H1 (cell line): ENCODE measurements at regions of chr11 and their contacts with region 1.

Region 1: GRCh38 chr11:119474682-119475596 is 52.0 kb upstream of the THY1 start:
- DNase-seq: peak in 1 of 2 experiments; percentile 91
- H3K4me3 ChIP-seq: no peak overlapping the region
- H3K27ac ChIP-seq: no peak overlapping the region
- H3K4me1 ChIP-seq: peaks cover 0 to 13% (median under 1%) of the 10 kb centered on the region in 4 experiments; a peak in 5 of 7 replicates
- H3K27me3 ChIP-seq: no peaks in the 10 kb centered on the region; a peak in 2 of 7 replicates
- CTCF ChIP-seq: peak; percentile 83 to 95 (median 95)
- EP300 ChIP-seq: no peak
- POLR2A ChIP-seq: no peak
- RAD21 ChIP-seq: peak; percentile 98 to 99

Region 2: DNA sequence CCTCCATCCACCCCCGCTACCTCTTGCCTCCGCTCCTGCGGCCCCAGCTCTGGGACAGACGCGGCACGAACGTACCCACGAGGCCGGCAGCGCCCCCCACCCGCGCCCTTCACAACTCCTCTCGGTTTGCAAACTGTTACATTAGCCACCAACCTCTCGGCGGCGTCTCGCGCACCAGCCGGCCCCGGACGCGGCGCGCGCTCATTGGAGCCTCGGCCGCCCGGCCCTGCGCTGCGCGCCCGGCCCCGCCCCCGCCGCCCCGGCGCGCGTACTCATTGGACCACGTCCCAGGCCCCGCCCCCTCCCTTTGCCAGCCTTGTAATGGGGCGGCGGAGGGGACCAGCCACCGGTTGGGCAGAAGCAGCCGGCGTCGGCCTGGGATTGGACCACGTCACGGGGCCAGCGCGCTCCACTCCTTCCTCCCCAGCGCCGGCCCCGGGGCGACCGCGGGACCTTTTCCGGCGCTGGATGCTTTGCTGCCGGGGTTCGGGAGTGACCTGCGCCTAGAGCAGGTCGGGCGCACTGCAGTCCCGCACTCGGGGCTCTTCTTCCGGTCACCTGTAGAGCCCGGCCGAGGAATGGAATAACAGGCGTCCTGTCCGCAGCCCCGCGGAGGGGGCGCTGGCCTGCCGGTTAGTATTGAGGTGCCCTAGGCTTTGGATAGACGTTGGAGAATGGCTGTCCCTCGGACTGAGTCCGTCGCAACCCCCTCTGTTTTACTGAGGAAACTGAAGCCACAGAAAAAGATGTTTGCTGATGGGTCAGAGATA is 417.8 kb before region 1 on chr11 and contains the start of gene HYOU1:
- CTCF ChIA-PET with region 1: no interaction called
- POLR2A ChIA-PET with region 1: no interaction called
- DNase-seq: peak; percentile 87 to 97
- H3K4me3 ChIP-seq: peak within 1 kb of the TSS; percentile 76 to 98 (median 89)
- H3K27ac ChIP-seq: peak within 1 kb of the TSS; percentile 82
- H3K4me1 ChIP-seq: peaks cover 0 to 8% (median 3%) of the 10 kb centered on the region in 4 experiments; a peak in 5 of 7 replicates
- H3K27me3 ChIP-seq: no peaks in the 10 kb centered on the region
- CTCF ChIP-seq: peak; percentile 28 to 42 (median 40)
- EP300 ChIP-seq: no peak
- POLR2A ChIP-seq: peak; percentile 42 to 66; a peak in 2 of 3 replicates
- RAD21 ChIP-seq: peak in 1 of 2 experiments; percentile 14; a peak in 1 of 4 replicates
- total RNA-seq, gene HYOU1: 293 and 295 TPM in 2 replicates

Region 3: GRCh38 chr11:119339589-119340343 is 135.2 kb before region 1 on chr11:
- CTCF ChIA-PET with region 1: interaction called, 25 read pairs
- POLR2A ChIA-PET with region 1: interaction called, 8 read pairs
- DNase-seq: peak in 1 of 2 experiments; percentile 94
- H3K4me3 ChIP-seq: peak overlapping the region; percentile 34 to 69 (median 43)
- H3K27ac ChIP-seq: no peak overlapping the region
- H3K4me1 ChIP-seq: peaks cover 5 to 37% (median 28%) of the 10 kb centered on the region in 4 experiments
- H3K27me3 ChIP-seq: peaks cover 12 to 42% (median 33%) of the 10 kb centered on the region in 4 experiments
- CTCF ChIP-seq: peak in 2 of 3 experiments; percentile 71 to 86; a peak in 3 of 4 replicates
- EP300 ChIP-seq: peak in 1 of 2 experiments; percentile 52; a peak in 1 of 3 replicates
- POLR2A ChIP-seq: no peak
- RAD21 ChIP-seq: peak; percentile 54 to 70

Region 4: DNA sequence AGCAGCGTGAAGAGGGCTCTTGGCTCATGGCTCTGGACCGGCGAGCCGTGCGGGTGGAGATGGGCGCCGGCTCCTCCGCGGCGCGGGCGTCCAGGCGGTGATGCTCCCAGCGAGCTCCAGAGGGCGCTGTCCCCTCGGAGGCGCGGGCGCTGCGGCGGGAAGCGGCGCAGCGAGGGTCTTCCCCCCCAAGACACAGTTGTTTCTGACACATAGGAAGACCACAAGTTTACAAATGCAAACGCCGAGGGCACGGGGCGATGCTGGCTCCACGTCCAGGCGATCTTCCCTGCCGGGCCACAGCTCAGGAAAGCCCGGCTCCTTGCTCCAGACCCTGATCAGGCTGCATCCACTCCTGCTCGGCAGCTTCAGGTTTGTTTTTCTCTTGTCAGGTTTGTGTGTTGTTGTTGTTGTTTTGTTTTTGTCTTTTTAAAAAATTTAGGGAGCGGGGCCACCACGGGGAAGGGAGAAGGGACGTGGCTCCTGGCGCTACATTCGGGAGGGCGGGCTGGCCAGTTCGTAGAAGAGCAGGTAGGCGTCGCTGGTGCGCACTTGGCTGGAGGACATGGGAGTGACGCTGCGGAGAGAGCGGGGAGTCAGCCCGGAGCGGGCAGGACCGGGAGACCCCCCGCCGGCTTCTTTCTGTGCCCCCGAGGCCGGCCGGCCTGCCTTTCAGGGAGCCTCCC is 118.4 kb before region 1 on chr11:
- CTCF ChIA-PET with region 1: interaction called, 44 read pairs
- POLR2A ChIA-PET with region 1: interaction called, 3 read pairs
- DNase-seq: peak in 1 of 2 experiments; percentile 93
- H3K4me3 ChIP-seq: peak overlapping the region; percentile 26 to 80 (median 76); a peak in 7 of 8 replicates
- H3K27ac ChIP-seq: no peak overlapping the region
- H3K4me1 ChIP-seq: peaks cover 6 to 9% (median 8%) of the 10 kb centered on the region in 4 experiments
- H3K27me3 ChIP-seq: peaks cover 0 to 4% (median under 1%) of the 10 kb centered on the region in 4 experiments; a peak in 3 of 7 replicates
- CTCF ChIP-seq: peak; percentile 77 to 97 (median 93)
- EP300 ChIP-seq: peak in 1 of 2 experiments; percentile 90; a peak in 1 of 3 replicates
- POLR2A ChIP-seq: no peak
- RAD21 ChIP-seq: peak; percentile 74 to 85

Region 5: GRCh38 chr11:119381181-119381988 is 93.6 kb before region 1 on chr11 and contains the start of gene USP2:
- CTCF ChIA-PET with region 1: interaction called, 336 read pairs
- POLR2A ChIA-PET with region 1: interaction called, 3 read pairs
- DNase-seq: peak in 1 of 2 experiments; percentile 99
- H3K4me3 ChIP-seq: peak within 1 kb of the TSS; percentile 62 to 81 (median 66)
- H3K27ac ChIP-seq: peak within 1 kb of the TSS; percentile 53; the same call in 1 of the 2 replicates
- H3K4me1 ChIP-seq: peaks cover 9 to 35% (median 30%) of the 10 kb centered on the region in 4 experiments
- H3K27me3 ChIP-seq: peaks cover 0 to 12% (median 10%) of the 10 kb centered on the region in 4 experiments; a peak in 6 of 7 replicates
- CTCF ChIP-seq: peak; percentile 76 to 81 (median 79)
- EP300 ChIP-seq: no peak
- POLR2A ChIP-seq: peak in 1 of 2 experiments; percentile 18; a peak in 1 of 3 replicates
- RAD21 ChIP-seq: peak; percentile 51 to 62
- total RNA-seq, gene USP2: 6.9 and 8.5 TPM in 2 replicates

Region 6: GRCh38 chr11:119432484-119433357 is 42.2 kb before region 1 on chr11:
- CTCF ChIA-PET with region 1: interaction called, 10 read pairs
- POLR2A ChIA-PET with region 1: no interaction called
- DNase-seq: no peak
- H3K4me3 ChIP-seq: no peak overlapping the region
- H3K27ac ChIP-seq: no peak overlapping the region
- H3K4me1 ChIP-seq: peaks cover 6 to 12% (median 8%) of the 10 kb centered on the region in 4 experiments
- H3K27me3 ChIP-seq: no peaks in the 10 kb centered on the region
- CTCF ChIP-seq: no peak
- EP300 ChIP-seq: no peak
- POLR2A ChIP-seq: no peak
- RAD21 ChIP-seq: no peak

Region 7: DNA sequence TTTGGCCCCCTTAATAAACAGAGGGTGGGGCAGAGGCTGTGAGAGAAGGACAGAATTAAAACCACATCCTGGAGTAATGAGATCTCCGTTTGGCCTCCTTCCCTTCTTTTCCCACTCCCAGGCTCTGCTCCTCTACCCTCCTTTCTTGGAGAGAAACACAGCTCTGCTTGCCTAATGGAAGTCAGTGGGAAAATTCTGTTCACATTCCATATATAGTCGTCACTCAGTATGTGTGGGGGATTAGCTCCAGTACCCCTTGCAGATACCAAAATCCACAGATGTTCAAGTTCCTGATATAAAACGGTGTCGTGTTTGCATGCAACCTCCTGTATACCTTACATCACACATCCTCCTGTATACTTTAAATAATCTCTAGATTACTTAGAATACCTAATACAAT is 14.4 kb before region 1 on chr11:
- CTCF ChIA-PET with region 1: interaction called, 11 read pairs
- POLR2A ChIA-PET with region 1: interaction called, 9 read pairs
- DNase-seq: no peak
- H3K4me3 ChIP-seq: no peak overlapping the region
- H3K27ac ChIP-seq: no peak overlapping the region
- H3K4me1 ChIP-seq: peaks cover 2 to 11% (median 6%) of the 10 kb centered on the region in 4 experiments; a peak in 4 of 7 replicates
- H3K27me3 ChIP-seq: no peaks in the 10 kb centered on the region
- CTCF ChIP-seq: no peak
- EP300 ChIP-seq: no peak
- POLR2A ChIP-seq: no peak
- RAD21 ChIP-seq: no peak